ENCODE measurements at regions of chr15 and their contacts with region 1.

Region 1: DNA sequence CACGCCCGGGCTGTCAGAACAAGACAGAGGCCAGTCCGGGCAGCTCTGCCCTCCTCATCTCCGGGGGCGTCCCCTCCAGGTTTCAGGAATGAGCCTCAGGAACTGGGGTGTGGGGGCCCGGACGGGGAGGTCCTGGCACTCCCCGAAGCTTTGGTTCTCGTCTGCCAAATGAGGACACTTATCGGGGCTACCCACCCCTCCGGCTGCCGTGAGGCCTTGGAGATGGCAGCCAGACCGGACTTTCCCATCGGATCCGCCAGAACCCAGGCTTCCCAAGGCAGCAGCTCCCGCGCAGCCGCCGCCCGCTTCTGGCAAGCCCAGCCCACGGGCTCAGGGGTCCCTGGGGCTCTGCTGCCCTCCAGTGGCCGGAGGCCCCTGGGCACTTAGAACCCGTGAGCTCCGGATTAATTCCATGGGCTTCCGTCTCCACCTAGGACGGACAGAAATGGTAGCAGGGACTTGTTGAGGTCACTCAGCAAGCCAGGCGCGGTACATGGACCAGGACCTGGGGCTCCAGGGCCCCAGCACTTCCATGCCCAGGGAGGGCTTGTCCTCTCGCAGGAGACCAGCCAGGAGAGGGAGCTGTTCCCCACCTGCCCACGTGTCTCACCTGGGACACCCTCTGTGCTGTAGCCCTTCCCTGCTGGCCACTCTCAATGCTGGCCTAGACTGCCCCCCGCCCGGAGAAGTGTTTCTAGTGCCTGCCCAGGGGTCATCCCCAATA is 89.4 kb downstream of the LINGO1 start:
- DNase-seq: peak; percentile 77 to 84 (median 80)
- H3K4me3 ChIP-seq: peak overlapping the region; percentile 28 to 85 (median 71)
- H3K27ac ChIP-seq: peak overlapping the region in 1 of 2 experiments; percentile 55
- H3K4me1 ChIP-seq: peaks cover 0 to 23% (median 12%) of the 10 kb centered on the region in 4 experiments
- H3K27me3 ChIP-seq: peaks cover 0 to 10% (median 0%) of the 10 kb centered on the region in 5 experiments

Region 2: GRCh38 chr15:77107531-77108355 is 435.6 kb before region 1 on chr15:
- CTCF ChIA-PET with region 1: interaction called, 16 read pairs
- POLR2A ChIA-PET with region 1: no interaction called
- DNase-seq: peak; percentile 20 to 52 (median 32)
- H3K4me3 ChIP-seq: no peak overlapping the region
- H3K27ac ChIP-seq: no peak overlapping the region
- H3K4me1 ChIP-seq: no peaks in the 10 kb centered on the region
- H3K27me3 ChIP-seq: no peaks in the 10 kb centered on the region

Region 3: DNA sequence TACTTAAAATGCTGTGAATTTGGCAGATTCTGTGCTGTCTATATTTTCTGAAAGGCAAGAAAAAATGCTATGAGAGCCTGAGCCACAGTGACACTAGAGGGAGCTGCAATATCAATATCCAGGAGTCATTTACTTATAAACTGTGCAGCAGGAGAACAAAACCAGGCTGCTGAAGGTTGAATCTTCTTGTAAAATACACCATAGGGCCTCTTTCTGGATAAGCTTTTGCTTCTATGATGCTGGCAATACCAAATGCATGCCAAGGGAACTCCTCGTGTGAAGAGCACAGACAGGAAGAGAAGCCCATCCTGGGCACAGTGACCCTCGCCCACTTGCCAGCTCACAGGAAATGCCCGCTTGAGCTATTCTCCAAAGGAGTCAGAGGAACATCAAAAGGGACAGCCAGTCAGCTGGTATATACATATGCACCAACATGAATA is 424.4 kb before region 1 on chr15:
- CTCF ChIA-PET with region 1: interaction called, 34 read pairs
- POLR2A ChIA-PET with region 1: interaction called, 3 read pairs
- DNase-seq: peak; percentile 70 to 86 (median 81)
- H3K4me3 ChIP-seq: no peak overlapping the region
- H3K27ac ChIP-seq: no peak overlapping the region
- H3K4me1 ChIP-seq: peaks cover 0 to 4% (median 1%) of the 10 kb centered on the region in 4 experiments
- H3K27me3 ChIP-seq: no peaks in the 10 kb centered on the region

Region 4: DNA sequence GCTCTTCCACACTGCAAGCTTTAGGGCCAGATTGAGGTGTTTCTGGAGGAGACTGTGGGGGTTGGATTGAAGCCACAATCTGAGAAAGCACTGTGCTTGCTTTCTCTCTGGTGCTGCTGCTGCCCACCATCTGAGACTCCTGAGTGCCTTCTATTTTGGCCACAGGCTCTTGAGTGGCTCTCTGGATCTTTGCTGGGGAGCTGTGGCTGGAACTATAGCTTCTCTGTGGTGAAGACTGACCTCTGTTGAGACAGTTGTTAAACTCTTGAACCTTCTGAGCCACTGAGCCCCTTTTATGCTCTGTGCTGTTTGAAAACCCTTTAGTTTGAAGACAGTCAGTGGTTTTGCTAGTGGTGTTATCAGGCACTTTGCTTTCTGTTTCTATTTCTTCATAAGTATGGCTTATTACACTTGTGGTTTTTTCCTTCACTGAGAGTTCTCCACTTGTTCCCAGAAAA is 363.8 kb before region 1 on chr15:
- CTCF ChIA-PET with region 1: interaction called, 53 read pairs
- POLR2A ChIA-PET with region 1: no interaction called
- DNase-seq: peak in 2 of 3 donors; percentile 54 to 62
- H3K4me3 ChIP-seq: peak overlapping the region in 1 of 7 experiments; percentile 40
- H3K27ac ChIP-seq: peak overlapping the region in 1 of 2 experiments; percentile 38
- H3K4me1 ChIP-seq: peaks cover 6 to 17% (median 9%) of the 10 kb centered on the region in 4 experiments
- H3K27me3 ChIP-seq: no peaks in the 10 kb centered on the region

Region 5: GRCh38 chr15:77186594-77187011 is 356.7 kb before region 1 on chr15:
- CTCF ChIA-PET with region 1: interaction called, 53 read pairs
- POLR2A ChIA-PET with region 1: no interaction called
- DNase-seq: peak; percentile 70 to 86 (median 83)
- H3K4me3 ChIP-seq: no peak overlapping the region
- H3K27ac ChIP-seq: peak overlapping the region in 1 of 2 experiments; percentile 77
- H3K4me1 ChIP-seq: peaks cover 25 to 59% (median 42%) of the 10 kb centered on the region in 4 experiments
- H3K27me3 ChIP-seq: no peaks in the 10 kb centered on the region

Region 6: GRCh38 chr15:77426871-77427270 is 116.5 kb before region 1 on chr15:
- CTCF ChIA-PET with region 1: no interaction called
- POLR2A ChIA-PET with region 1: no interaction called
- DNase-seq: no peak
- H3K4me3 ChIP-seq: no peak overlapping the region
- H3K27ac ChIP-seq: no peak overlapping the region
- H3K4me1 ChIP-seq: peaks cover 0 to 5% (median 1%) of the 10 kb centered on the region in 4 experiments
- H3K27me3 ChIP-seq: no peaks in the 10 kb centered on the region

Region 7: DNA sequence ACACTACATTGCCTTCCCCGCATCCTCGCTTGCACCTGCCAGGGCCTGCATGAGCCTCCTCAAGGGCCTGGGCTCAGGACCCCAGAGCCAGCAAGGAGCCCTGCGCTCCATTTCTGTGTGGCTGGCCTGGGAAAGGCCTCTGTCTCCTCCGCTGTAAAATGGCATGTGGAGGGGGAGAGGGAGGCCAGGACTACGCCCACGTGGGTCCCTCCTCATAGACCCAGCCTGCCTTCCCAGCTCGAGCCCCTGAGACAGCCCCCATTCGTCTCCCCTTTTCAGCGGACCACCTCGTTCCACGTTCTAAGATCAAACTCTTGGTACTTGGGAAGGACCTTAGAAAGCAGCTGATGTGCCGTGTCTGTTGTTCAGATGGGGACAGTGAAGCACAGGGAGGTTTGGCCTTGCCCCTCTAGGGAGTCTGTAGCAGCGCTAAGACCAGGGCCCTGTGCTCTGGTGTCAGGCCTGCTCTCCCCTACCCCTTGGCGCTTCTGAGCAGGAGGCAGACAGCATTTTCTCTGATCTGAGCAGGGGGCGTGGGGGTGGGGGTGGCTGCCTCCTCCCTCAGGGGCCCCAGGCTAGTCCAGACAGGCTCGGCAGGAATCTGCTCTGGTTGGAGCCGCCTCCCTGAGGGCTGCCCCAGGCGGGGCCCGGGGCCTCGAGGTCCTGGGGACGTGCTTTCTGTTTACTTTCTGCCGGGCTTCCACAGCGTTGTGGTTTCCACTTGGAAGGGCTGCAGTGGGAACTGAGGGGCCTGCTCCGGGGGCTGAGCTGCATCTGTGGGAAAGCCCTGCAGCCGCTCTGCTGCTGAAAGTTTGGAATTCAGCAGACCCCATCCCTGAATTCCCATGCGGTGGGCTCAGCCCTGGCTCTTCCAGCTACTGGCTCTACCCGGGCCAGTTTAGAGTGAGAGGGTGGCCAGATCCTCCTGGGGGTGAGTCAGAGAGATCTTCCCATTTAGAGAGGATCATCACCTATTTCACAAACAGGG is 16.2 kb before region 1 on chr15:
- CTCF ChIA-PET with region 1: interaction called, 12 read pairs
- POLR2A ChIA-PET with region 1: no interaction called
- DNase-seq: no peak
- H3K4me3 ChIP-seq: peak overlapping the region in 2 of 7 experiments; percentile 32 to 45
- H3K27ac ChIP-seq: no peak overlapping the region
- H3K4me1 ChIP-seq: peaks cover 0 to 11% (median 10%) of the 10 kb centered on the region in 4 experiments
- H3K27me3 ChIP-seq: peaks cover 0 to 14% (median 4%) of the 10 kb centered on the region in 5 experiments

Measured in common myeloid progenitor, CD34-positive (primary cell).